Mammary epithelial cell (primary cell): ENCODE measurements at regions of chr18 and their contacts with region 1.

Region 1: DNA sequence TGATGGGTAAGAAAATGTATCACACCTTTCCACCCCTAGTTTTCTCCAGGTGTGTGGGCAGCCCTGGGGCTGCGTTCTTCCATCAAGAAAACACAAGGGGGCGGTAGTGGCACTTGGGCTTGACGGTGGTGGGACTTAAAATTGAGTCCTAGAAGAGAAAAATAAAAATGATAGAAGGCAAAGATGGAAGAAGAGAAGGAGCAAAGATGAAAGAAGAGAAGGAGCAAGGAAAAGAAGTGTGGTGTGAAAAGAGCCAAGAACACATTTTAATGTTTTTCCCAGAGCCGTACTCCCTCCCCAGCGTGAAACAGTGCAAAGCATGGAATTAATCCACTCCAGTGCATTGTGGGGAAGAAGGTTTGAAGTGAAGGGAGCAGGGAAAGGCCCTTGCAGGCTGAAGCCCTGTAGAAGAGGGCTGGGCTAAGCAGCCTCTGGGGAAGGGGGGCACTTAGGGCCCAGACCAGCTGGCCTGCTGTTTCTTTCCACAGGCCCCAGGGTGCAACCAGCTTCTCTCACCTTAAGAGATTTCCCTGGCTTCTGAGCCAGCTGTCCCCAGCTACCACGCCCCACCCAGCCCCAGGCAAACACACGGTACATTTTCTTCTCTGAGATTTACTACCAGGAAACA is 256.8 kb downstream of the RNF152 start:
- DNase-seq: peak; percentile 45
- H3K4me3 ChIP-seq: no peak overlapping the region
- H3K27ac ChIP-seq: no peak overlapping the region
- H3K4me1 ChIP-seq: peaks cover 3% of the 10 kb centered on the region
- H3K27me3 ChIP-seq: no peaks in the 10 kb centered on the region
- CTCF ChIP-seq: peak; percentile 80 to 81

Region 2: GRCh38 chr18:61551586-61551985 is 84.4 kb before region 1 on chr18:
- CTCF ChIA-PET with region 1: no interaction called
- dilution Hi-C with region 1: no loop called
- in situ Hi-C with region 1: no loop called
- intact Hi-C with region 1: loop called (anchors 1 kb)
- DNase-seq: peak; percentile 68
- H3K4me3 ChIP-seq: no peak overlapping the region
- H3K27ac ChIP-seq: no peak overlapping the region
- H3K4me1 ChIP-seq: peaks cover 4% of the 10 kb centered on the region
- H3K27me3 ChIP-seq: no peaks in the 10 kb centered on the region
- CTCF ChIP-seq: peak; percentile 82 to 95

Region 3: GRCh38 chr18:61581578-61582201 is 54.3 kb before region 1 on chr18:
- CTCF ChIA-PET with region 1: no interaction called
- dilution Hi-C with region 1: no loop called
- in situ Hi-C with region 1: no loop called
- intact Hi-C with region 1: loop called (anchors 1 kb)
- DNase-seq: peak; percentile 59
- H3K4me3 ChIP-seq: peak overlapping the region; percentile 44 to 56 (median 50)
- H3K27ac ChIP-seq: no peak overlapping the region
- H3K4me1 ChIP-seq: peaks cover 10% of the 10 kb centered on the region
- H3K27me3 ChIP-seq: no peaks in the 10 kb centered on the region
- CTCF ChIP-seq: peak; percentile 85 to 98

Region 4: GRCh38 chr18:61669320-61669719 is 33.3 kb after region 1 on chr18:
- CTCF ChIA-PET with region 1: interaction called, 12 read pairs
- dilution Hi-C with region 1: no loop called
- in situ Hi-C with region 1: no loop called
- intact Hi-C with region 1: no loop called
- DNase-seq: peak; percentile 40
- H3K4me3 ChIP-seq: no peak overlapping the region
- H3K27ac ChIP-seq: no peak overlapping the region
- H3K4me1 ChIP-seq: no peaks in the 10 kb centered on the region
- H3K27me3 ChIP-seq: peaks cover 3% of the 10 kb centered on the region
- CTCF ChIP-seq: no peak

Region 5: DNA sequence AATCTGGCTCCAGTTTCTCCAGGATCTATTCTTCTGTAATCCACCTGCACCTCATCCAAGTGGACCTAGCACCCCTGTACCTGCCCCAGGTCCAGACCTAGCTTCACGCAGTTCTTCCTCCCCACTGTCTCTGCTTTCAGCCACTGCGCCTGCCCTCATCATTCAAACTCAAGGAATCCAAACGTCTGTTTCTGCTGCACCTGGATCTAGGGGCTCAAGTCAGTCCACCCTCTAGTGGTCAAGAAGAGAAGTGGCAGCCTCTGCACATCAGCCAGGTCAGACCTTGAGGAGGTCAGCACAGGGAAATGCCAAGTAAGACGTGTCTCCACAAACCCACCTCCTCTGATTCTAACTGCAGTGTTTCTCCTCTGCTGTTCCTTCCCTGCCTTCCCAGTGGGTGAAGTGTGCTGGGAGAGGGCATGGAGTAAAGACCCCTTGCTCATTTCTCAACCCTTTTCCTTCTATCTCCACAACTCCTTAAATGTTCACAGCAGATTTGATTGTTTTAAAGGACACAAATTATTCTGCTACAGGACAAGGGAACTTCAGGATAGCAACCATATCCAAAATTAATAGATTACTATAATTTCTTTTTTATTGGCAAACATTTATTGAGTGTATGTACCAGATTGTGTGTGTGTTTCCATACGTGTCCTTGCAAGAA is 265.4 kb after region 1 on chr18:
- CTCF ChIA-PET with region 1: no interaction called
- dilution Hi-C with region 1: no loop called
- in situ Hi-C with region 1: no loop called
- intact Hi-C with region 1: loop called (anchors 1 kb)
- DNase-seq: peak; percentile 60
- H3K4me3 ChIP-seq: no peak overlapping the region
- H3K27ac ChIP-seq: no peak overlapping the region
- H3K4me1 ChIP-seq: peaks cover 15% of the 10 kb centered on the region
- H3K27me3 ChIP-seq: no peaks in the 10 kb centered on the region
- CTCF ChIP-seq: peak; percentile 98

Region 6: DNA sequence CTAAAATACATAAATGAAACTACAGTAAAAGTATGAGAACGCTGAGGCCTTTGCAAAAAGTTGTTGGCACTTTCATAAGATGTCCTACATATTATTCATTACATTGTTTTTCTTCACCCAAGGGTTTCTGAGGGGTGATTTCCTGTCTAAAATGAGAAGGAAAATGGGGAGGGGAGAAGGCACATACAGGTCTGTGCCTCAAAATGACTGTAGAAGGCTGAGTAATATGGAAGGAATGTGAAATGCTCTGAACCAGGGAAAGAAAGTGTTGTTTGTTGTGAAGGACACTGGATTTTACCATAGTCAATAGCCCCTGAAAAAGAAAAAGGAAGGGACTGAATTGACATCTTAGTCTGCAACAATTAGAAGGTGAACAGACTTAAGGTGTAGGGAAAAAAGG is 356.3 kb after region 1 on chr18:
- CTCF ChIA-PET with region 1: no interaction called
- dilution Hi-C with region 1: no loop called
- in situ Hi-C with region 1: no loop called
- intact Hi-C with region 1: loop called (anchors 1 kb)
- DNase-seq: peak; percentile 80
- H3K4me3 ChIP-seq: no peak overlapping the region
- H3K27ac ChIP-seq: peak overlapping the region; percentile 61
- H3K4me1 ChIP-seq: peaks cover 53% of the 10 kb centered on the region
- H3K27me3 ChIP-seq: no peaks in the 10 kb centered on the region
- CTCF ChIP-seq: no peak